Vagina (tissue), 2 donors: ENCODE measurements at regions of chr21 and their contacts with region 1.

Region 1: GRCh38 chr21:40809673-40810197 is 37.2 kb downstream of the DSCAM start:
- DNase-seq: no peak
- H3K4me3 ChIP-seq: no peak overlapping the region
- H3K27ac ChIP-seq: no peak overlapping the region
- H3K4me1 ChIP-seq: no peaks in the 10 kb centered on the region
- H3K27me3 ChIP-seq: no peaks in the 10 kb centered on the region
- CTCF ChIP-seq: no peak
- POLR2A ChIP-seq: no peak

Region 2: DNA sequence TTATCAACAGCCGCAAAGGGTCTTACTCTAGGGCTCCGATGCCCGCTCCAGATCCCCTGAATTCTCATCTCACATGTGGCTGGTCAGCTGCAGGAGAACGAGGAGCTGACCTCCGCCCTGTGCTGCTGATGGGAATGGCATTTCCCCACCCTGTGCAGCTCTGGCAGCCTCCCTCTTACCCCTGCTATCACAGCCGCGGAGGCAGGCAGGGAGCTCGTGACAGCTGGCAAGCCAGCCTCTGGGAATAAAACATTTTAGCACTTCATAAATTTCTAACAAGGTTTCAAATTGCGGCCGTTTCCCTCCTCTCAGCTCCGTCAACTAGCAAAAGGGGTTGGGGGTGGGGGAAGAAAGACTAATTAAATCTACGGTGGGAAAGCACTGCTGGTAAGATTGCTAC is 43.9 kb before region 1 on chr21:
- intact Hi-C with region 1: no loop called
- DNase-seq: no peak
- H3K4me3 ChIP-seq: no peak overlapping the region
- H3K27ac ChIP-seq: no peak overlapping the region
- H3K4me1 ChIP-seq: no peaks in the 10 kb centered on the region
- H3K27me3 ChIP-seq: no peaks in the 10 kb centered on the region
- CTCF ChIP-seq: no peak
- POLR2A ChIP-seq: no peak

Region 3: DNA sequence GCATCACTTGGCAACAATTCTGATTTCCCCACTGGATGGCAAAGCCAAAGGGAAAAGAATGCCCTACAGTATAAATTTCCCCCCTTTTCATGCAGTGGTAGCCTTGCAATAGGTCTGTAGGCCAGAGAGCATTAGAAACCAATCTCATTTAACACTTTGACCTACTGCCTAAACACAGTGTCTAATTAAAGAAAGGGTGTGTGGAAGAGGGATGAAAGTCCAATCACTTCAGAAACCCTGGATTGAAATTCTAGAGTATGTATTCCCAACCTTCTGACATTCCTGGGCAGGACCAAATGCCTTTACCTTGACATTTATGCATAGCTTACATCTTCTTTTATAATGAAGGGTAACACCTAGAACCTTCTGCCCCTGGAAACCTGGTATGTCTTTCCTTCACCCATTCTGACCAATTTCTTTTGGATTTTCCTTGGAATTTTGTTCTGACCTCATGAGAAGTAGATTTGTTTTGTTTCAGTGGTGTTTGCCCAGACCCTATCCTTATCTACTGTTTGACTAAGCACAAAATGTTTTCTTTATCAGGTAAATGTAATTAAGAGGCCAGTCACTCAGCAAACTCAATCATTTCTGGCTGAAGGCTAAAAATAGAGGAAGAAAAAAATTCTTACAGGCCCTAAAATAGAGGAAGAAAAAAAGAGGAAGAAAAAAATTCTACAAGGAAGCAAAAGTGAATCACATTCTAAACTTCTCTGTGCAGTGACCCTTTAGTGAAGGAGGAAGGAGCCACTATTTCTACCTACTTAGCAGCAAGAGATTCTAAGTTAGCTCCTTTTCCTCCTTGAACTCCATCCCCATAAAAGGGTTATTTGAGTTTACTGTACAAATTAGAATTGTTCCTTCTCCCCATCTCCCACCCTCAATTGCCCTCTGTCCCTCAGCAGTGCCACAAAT is 166.7 kb after region 1 on chr21:
- intact Hi-C with region 1: loop called (anchors 10 kb)
- DNase-seq: no peak
- H3K4me3 ChIP-seq: no peak overlapping the region
- H3K27ac ChIP-seq: no peak overlapping the region
- H3K4me1 ChIP-seq: no peaks in the 10 kb centered on the region
- H3K27me3 ChIP-seq: no peaks in the 10 kb centered on the region
- CTCF ChIP-seq: no peak
- POLR2A ChIP-seq: no peak

Region 4: GRCh38 chr21:41280205-41280915 is 470.6 kb after region 1 on chr21:
- intact Hi-C with region 1: no loop called
- DNase-seq: no peak
- H3K4me3 ChIP-seq: no peak overlapping the region
- H3K27ac ChIP-seq: no peak overlapping the region
- H3K4me1 ChIP-seq: no peaks in the 10 kb centered on the region
- H3K27me3 ChIP-seq: no peaks in the 10 kb centered on the region
- CTCF ChIP-seq: no peak
- POLR2A ChIP-seq: no peak